Dendritic cell treated with granulocyte-macrophage colony-stimulating factor and Interleukin-4, amounts not matched to agents 40 ng/mL and 50 ng/mL, for 4 days (primary cell): ENCODE measurements at regions of chr13 and their contacts with region 1.

Region 1: DNA sequence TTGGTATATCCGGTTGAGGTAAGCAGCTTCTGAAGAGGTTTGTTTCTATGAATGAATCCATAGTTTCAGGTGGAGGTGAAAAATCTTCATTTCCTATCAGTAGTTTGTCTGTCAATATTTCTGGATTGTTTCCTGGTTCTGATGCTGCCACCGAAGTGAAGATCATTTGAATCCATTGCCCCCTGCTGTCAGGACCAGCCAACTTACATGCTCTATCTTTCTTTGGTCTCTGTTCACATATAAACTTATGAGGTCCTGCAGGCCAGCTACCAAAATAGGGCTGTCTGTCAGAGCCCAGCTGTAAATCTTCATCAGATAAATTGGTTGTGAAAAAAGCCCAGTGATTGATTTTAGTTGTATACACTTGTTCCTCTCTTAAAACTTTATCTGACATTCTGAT is 15.2 kb upstream of the N4BP2L1 start:
- H3K4me3 Mint-ChIP-seq: no peak overlapping the region
- H3K27ac Mint-ChIP-seq: no peak overlapping the region
- H3K4me1 Mint-ChIP-seq: peaks cover 39% of the 10 kb centered on the region
- H3K27me3 Mint-ChIP-seq: no peaks in the 10 kb centered on the region

Region 2: DNA sequence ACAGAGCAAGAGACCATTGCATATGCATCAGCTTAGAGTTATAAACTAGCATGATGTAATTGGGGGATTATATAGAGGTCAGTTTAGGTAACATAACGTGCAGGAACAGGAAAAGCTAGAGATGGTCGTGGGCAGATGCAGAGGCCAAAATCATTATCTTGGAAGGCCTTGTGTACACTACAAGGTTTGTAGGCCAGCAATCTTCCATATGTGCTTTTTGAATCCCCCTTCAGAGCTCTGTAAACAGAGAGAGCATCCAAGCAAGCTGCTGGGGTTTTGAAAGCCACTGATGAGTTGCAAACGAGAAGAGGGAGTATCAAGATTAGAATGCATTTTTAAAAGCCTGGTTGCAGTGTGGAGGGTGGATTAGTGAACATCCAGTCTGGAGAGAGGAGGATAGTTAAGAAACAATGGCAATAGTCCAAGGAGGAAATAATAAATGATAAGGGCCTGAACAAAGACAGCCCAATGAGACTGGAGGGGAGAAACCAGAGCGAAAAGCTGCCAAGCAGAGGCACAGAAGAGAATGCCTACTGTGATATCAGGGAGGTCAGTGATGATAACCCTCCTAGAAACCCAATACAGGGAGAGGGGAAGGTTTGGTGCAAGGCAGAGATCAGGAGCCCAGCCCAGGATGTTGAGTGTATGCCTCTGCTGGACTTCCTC is 237.5 kb before region 1 on chr13:
- intact Hi-C with region 1: no loop called
- H3K4me3 Mint-ChIP-seq: no peak overlapping the region
- H3K27ac Mint-ChIP-seq: no peak overlapping the region
- H3K4me1 Mint-ChIP-seq: no peaks in the 10 kb centered on the region
- H3K27me3 Mint-ChIP-seq: no peaks in the 10 kb centered on the region

Region 3: GRCh38 chr13:32246468-32246867 is 196.6 kb before region 1 on chr13:
- intact Hi-C with region 1: loop called (anchors 2 kb)
- H3K4me3 Mint-ChIP-seq: no peak overlapping the region
- H3K27ac Mint-ChIP-seq: peak overlapping the region; percentile 45
- H3K4me1 Mint-ChIP-seq: peaks cover 8% of the 10 kb centered on the region
- H3K27me3 Mint-ChIP-seq: no peaks in the 10 kb centered on the region

Region 4: GRCh38 chr13:32284927-32285632 is 158.0 kb before region 1 on chr13:
- intact Hi-C with region 1: no loop called
- H3K4me3 Mint-ChIP-seq: no peak overlapping the region
- H3K27ac Mint-ChIP-seq: no peak overlapping the region
- H3K4me1 Mint-ChIP-seq: no peaks in the 10 kb centered on the region
- H3K27me3 Mint-ChIP-seq: no peaks in the 10 kb centered on the region

Region 5: DNA sequence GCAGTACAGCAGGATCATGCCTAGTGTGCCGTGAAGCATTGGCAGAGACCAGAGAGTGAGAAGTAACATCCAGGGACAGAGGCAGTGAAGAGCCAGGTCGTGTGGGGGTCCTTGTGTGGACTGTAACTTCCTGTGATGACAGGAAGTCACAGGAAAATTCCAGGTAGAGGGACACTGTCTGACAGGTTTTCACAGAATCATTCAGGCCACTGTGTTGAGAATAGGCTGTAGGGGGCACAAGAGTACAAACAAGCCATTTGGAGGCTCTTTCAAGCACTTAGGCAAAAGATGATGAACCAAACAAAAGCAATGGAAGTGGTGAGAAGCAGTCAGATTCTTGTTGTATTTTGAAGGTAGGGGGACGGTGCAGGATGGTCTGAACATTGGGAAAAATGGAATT is 61.6 kb before region 1 on chr13:
- intact Hi-C with region 1: loop called (anchors 5 kb)
- H3K4me3 Mint-ChIP-seq: no peak overlapping the region
- H3K27ac Mint-ChIP-seq: no peak overlapping the region
- H3K4me1 Mint-ChIP-seq: no peaks in the 10 kb centered on the region
- H3K27me3 Mint-ChIP-seq: no peaks in the 10 kb centered on the region